ENCODE measurements at regions of chr2 and their contacts with region 1.

Region 1: GRCh38 chr2:161954103-161954502 is 119.9 kb downstream of the DPP4 start:
- DNase-seq: peak; percentile 78
- H3K4me3 Mint-ChIP-seq: peak overlapping the region; percentile 50
- H3K27ac Mint-ChIP-seq: peak overlapping the region; percentile 86
- H3K4me1 Mint-ChIP-seq: peaks cover 57% of the 10 kb centered on the region
- H3K27me3 Mint-ChIP-seq: no peaks in the 10 kb centered on the region

Region 2: DNA sequence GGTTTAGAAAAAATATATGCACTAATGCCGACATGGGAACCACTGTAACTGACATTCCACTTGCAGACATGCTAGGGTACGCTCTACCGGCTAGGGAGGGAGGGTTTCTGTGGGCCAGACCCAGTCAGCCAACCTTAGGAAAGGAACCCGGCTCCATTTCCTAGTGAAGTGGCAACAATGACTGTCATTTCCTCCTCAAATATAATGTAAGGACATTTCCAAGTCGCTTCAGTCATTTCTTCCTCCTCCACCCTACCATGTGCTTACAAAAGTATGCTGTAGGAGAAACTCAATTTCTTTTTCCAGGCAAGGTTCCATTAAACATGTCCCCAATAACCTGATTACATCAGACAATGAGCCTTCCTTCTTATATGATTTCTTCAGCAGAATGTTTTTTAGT is 710.2 kb before region 1 on chr2:
- intact Hi-C with region 1: loop called (anchors 2 kb)
- DNase-seq: peak; percentile 70
- H3K4me3 Mint-ChIP-seq: peak overlapping the region; percentile 94
- H3K27ac Mint-ChIP-seq: peak overlapping the region; percentile 97
- H3K4me1 Mint-ChIP-seq: peaks cover 43% of the 10 kb centered on the region
- H3K27me3 Mint-ChIP-seq: no peaks in the 10 kb centered on the region

Region 3: GRCh38 chr2:161965994-161966393 is 11.9 kb after region 1 on chr2:
- intact Hi-C with region 1: loop called (anchors 1 kb)
- DNase-seq: no peak
- H3K4me3 Mint-ChIP-seq: no peak overlapping the region
- H3K27ac Mint-ChIP-seq: no peak overlapping the region
- H3K4me1 Mint-ChIP-seq: peaks cover 39% of the 10 kb centered on the region
- H3K27me3 Mint-ChIP-seq: no peaks in the 10 kb centered on the region

Region 4: GRCh38 chr2:161992526-161992925 is 38.4 kb after region 1 on chr2:
- intact Hi-C with region 1: loop called (anchors 1 kb)
- DNase-seq: peak; percentile 90
- H3K4me3 Mint-ChIP-seq: peak overlapping the region; percentile 85
- H3K27ac Mint-ChIP-seq: peak overlapping the region; percentile 98
- H3K4me1 Mint-ChIP-seq: peaks cover 62% of the 10 kb centered on the region
- H3K27me3 Mint-ChIP-seq: no peaks in the 10 kb centered on the region

Region 5: DNA sequence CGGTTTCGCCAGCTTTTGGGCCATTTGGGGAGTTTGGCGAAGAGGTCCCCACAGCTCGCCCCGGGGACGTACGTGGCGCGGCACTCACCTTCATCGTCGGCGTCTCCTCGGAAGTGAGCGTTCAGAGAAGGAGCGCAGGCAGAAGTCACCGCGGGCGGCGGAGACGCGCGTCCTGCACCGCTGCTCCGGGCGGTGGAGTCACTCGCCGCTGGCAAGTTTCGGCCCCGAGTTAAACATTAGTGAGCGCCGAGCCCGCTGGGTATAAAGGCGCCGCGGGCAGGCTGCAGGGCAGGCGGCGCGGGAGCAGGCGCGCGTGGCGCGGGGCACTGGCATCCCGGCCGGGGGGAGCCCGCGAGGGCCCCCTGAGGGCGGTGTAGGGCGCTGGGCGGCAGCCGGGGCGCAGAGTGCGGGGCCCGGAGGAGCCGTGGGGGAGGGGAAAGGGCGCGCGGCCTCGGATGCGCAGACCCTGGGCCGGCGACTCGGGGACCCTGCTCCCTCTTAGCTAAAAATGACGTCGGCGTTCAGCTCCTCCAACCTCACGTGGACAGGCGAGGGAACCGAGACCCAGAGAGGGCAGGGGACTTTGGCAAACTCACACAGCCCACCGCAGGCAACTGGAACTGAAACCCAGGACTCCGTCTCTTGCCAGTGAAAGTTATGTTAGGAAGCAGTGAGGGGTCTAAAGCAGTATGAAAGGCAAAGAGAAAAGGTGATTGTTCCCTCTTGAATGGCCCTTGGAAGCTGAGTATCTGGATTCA is 120.0 kb after region 1 on chr2 and contains the start of gene DPP4:
- intact Hi-C with region 1: loop called (anchors 1 kb)
- DNase-seq: peak; percentile 89
- H3K4me3 Mint-ChIP-seq: peak within 1 kb of the TSS; percentile 95
- H3K27ac Mint-ChIP-seq: peak within 1 kb of the TSS; percentile 96
- H3K4me1 Mint-ChIP-seq: peaks cover 46% of the 10 kb centered on the region
- H3K27me3 Mint-ChIP-seq: no peaks in the 10 kb centered on the region
- total RNA-seq, gene DPP4: 65.4 and 68.0 TPM in 2 replicates

Measured in activated CD4-positive, alpha-beta T cell treated with anti-CD3 and anti-CD28 coated beads, Interleukin-2, amount 10 ng/mL, durations not matched to agents 24 days and 14 days (primary cell).